Cardiac septum (tissue), 1 donor: ENCODE measurements at regions of chr7 and their contacts with region 1.

Region 1: GRCh38 chr7:93055543-93056107 is 62.2 kb downstream of the SAMD9 start:
- DNase-seq: no peak

Region 2: DNA sequence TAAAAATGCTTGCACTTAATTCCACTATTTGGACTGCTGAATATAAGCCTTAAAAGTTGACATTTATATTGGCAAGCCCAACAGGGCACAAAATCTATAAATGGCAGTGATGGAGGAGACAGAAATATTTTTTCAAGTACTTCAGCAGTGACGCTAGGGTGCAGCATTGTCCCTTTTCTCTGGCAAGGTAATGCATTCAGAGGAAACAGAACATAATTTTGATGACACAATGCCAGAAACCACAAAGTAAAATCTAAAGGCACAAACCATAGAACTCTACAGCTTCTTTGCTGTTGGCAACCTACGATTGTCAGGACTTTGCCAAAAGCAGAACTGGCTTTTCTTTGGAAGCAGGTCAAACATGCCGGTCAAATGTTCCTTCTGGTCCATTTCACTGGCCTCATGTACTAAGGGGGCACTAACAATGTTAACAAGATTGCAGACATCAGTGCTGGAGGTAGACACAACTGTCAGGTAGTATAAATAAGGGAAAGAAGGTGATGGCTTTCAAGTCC is 434.5 kb before region 1 on chr7:
- intact Hi-C with region 1: loop called (anchors 2 kb)
- DNase-seq: no peak

Region 3: DNA sequence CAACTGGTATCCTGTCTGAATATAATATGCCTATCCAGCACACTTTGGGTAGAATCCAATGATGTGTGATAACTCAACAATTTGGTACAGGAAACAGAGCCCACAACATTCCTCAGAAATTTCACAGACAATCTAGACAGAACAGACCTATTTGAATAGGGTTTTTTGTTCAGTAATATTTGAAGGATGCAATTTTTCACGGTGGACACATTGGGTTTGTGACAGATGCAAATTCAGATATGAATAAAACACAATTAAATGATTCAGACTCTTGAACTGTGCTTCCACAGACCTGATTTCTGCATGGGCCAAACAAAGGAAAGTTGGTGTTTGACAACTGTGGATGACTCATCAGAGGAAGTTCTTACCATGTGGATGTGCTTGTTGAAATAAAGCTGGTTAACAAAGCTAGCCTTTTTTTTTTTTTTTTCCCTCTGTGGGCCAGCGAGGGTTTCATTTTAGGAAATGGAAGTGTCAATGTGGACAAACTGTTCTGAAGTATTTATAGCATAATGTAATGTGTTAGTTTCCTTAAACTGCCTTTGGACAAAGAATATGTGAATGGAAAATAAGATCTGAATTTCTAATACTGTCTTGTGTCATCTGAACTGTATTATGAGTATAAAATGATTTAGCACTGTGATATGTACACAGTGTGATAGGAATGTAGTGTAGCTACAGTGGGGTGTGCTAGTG is 422.3 kb before region 1 on chr7:
- intact Hi-C with region 1: no loop called
- DNase-seq: no peak

Region 4: GRCh38 chr7:92691578-92691977 is 364.0 kb before region 1 on chr7:
- intact Hi-C with region 1: loop called (anchors 10 kb)
- DNase-seq: no peak

Region 5: DNA sequence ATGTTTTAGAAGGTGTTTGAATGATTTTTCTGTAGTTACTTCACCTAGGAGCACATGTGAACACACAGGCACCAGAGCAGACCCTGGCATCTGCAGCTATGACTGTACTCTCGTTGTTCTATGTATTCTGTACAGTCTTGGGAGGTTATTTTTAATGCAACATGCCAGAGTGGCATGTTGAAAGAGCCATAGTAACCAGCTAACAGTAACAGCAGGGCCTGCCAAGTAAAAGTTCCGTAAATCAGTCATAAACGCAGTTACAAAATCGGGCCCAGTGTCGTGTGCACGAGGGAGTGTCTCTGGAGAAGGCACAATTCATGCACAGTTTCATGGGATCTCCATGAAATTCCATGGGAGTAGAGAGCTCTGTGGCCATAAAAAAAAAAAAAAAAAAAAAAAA is 111.0 kb before region 1 on chr7:
- intact Hi-C with region 1: no loop called
- DNase-seq: no peak

Region 6: GRCh38 chr7:93414628-93415027 is 359.0 kb after region 1 on chr7:
- intact Hi-C with region 1: no loop called
- DNase-seq: no peak